ENCODE measurements at regions of chr3 and their contacts with region 1.

Region 1: GRCh38 chr3:120795017-120795648 is 52.6 kb downstream of the GTF2E1 start:
- DNase-seq: peak; percentile 33 to 75
- ATAC-seq: peak; percentile 84 to 92
- H3K4me3 ChIP-seq: no peak overlapping the region
- H3K27ac ChIP-seq: no peak overlapping the region
- H3K4me1 ChIP-seq: peaks cover 19% of the 10 kb centered on the region; the same call in 2 of the 3 replicates
- CTCF ChIP-seq: peak; percentile 88
- EP300 ChIP-seq: no peak
- POLR2A ChIP-seq: no peak
- RAD21 ChIP-seq: peak; percentile 86 to 95

Region 2: DNA sequence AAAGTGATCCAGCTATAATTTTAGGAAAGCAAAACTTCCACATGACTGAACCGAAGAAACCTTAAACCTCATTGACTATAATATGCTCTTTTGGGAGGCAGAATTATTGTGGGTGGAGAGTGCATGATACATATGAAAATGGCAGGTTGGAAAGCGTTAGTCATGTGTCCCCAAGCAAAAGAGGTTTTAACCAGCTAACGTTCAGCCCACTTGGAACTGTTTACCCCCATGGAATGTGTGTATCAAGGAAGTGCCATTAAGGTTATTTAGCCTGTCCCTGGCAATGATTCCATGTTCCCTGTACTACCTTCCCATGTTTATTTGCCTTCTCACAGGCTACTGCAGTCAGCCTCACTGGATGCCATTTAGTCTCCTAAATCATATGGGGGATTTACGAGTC is 401.9 kb before region 1 on chr3:
- CTCF ChIA-PET with region 1: no interaction called
- POLR2A ChIA-PET with region 1: no interaction called
- DNase-seq: no peak
- ATAC-seq: no peak
- H3K4me3 ChIP-seq: no peak overlapping the region
- H3K27ac ChIP-seq: no peak overlapping the region
- H3K4me1 ChIP-seq: no peaks in the 10 kb centered on the region
- CTCF ChIP-seq: no peak
- EP300 ChIP-seq: no peak
- POLR2A ChIP-seq: no peak
- RAD21 ChIP-seq: no peak

Region 3: GRCh38 chr3:120567370-120568201 is 227.5 kb before region 1 on chr3:
- CTCF ChIA-PET with region 1: interaction called, 12 read pairs
- POLR2A ChIA-PET with region 1: no interaction called
- DNase-seq: peak in 1 of 2 experiments; percentile 45
- ATAC-seq: peak; percentile 95 to 96
- H3K4me3 ChIP-seq: peak overlapping the region; percentile 28; the same call in 2 of the 3 replicates
- H3K27ac ChIP-seq: peak overlapping the region in 1 of 2 experiments; percentile 45; a peak in 2 of 6 replicates
- H3K4me1 ChIP-seq: peaks cover 4% of the 10 kb centered on the region; the same call in 2 of the 3 replicates
- CTCF ChIP-seq: peak; percentile 58
- EP300 ChIP-seq: no peak
- POLR2A ChIP-seq: no peak
- RAD21 ChIP-seq: peak; percentile 15 to 21; a peak in 1 of 5 replicates

Region 4: GRCh38 chr3:120622870-120623731 is 172.0 kb before region 1 on chr3:
- CTCF ChIA-PET with region 1: interaction called, 30 read pairs
- POLR2A ChIA-PET with region 1: interaction called, 3 read pairs
- DNase-seq: peak; percentile 48 to 79
- ATAC-seq: peak; percentile 86 to 92
- H3K4me3 ChIP-seq: no peak overlapping the region
- H3K27ac ChIP-seq: peak overlapping the region; percentile 39 to 56; a peak in 5 of 6 replicates
- H3K4me1 ChIP-seq: peaks cover 20% of the 10 kb centered on the region; the same call in 2 of the 3 replicates
- CTCF ChIP-seq: peak; percentile 77
- EP300 ChIP-seq: no peak
- POLR2A ChIP-seq: no peak
- RAD21 ChIP-seq: peak; percentile 92 to 95

Region 5: DNA sequence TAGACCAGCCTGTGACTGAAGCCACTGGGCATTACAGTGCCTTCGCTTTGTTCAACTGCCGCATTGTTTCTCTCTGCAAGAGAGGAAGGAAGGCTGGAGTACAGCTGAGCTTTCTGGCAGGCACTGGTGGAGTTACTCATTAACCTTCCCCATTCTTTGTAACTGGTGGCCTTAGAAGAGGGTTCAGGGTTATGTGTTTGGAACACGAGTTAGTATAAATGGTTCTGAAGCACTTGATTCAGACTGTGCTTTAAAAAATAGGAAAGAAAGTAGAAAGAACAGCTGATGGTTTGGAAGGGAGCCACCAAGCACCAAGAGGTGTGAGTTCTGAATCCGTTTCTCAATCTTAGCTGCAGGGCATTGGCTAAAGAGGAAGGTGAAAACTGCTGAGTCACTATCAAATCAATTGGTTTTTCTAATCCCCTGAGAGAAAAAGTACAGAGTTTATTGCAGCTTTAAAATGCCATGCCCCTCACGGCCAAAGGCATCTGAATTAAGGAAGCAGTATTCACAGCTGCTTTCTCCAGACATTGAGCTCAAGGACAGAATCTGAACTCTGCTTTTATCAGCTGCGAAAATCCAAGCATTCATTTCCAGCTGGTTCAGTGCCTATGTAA is 116.7 kb before region 1 on chr3:
- CTCF ChIA-PET with region 1: interaction called, 11 read pairs
- POLR2A ChIA-PET with region 1: no interaction called
- DNase-seq: peak; percentile 74 to 90
- ATAC-seq: peak; percentile 82 to 87
- H3K4me3 ChIP-seq: peak overlapping the region; percentile 50
- H3K27ac ChIP-seq: peak overlapping the region; percentile 94 to 95
- H3K4me1 ChIP-seq: peaks cover 58% of the 10 kb centered on the region
- CTCF ChIP-seq: no peak
- EP300 ChIP-seq: peak in 1 of 2 experiments; percentile 64; a peak in 2 of 5 replicates
- POLR2A ChIP-seq: no peak
- RAD21 ChIP-seq: peak; percentile 8 to 39; a peak in 2 of 5 replicates

Region 6: GRCh38 chr3:120773932-120774331 is 21.2 kb before region 1 on chr3:
- CTCF ChIA-PET with region 1: interaction called, 13 read pairs
- POLR2A ChIA-PET with region 1: no interaction called
- DNase-seq: no peak
- ATAC-seq: no peak
- H3K4me3 ChIP-seq: no peak overlapping the region
- H3K27ac ChIP-seq: no peak overlapping the region
- H3K4me1 ChIP-seq: no peaks in the 10 kb centered on the region
- CTCF ChIP-seq: no peak
- EP300 ChIP-seq: no peak
- POLR2A ChIP-seq: no peak
- RAD21 ChIP-seq: no peak

Region 7: GRCh38 chr3:120780977-120781376 is 14.2 kb before region 1 on chr3:
- CTCF ChIA-PET with region 1: interaction called, 10 read pairs
- POLR2A ChIA-PET with region 1: no interaction called
- DNase-seq: peak; percentile 31 to 48
- ATAC-seq: peak; percentile 96 to 98
- H3K4me3 ChIP-seq: no peak overlapping the region
- H3K27ac ChIP-seq: peak overlapping the region; percentile 33 to 36; a peak in 3 of 6 replicates
- H3K4me1 ChIP-seq: peaks cover 13% of the 10 kb centered on the region
- CTCF ChIP-seq: no peak
- EP300 ChIP-seq: no peak
- POLR2A ChIP-seq: no peak
- RAD21 ChIP-seq: no peak

Measured in A549 (cell line).